Dorsolateral prefrontal cortex (tissue), 120 donors: ENCODE measurements at regions of chr7 and their contacts with region 1.

Region 1: GRCh38 chr7:102236592-102237287 is 49.9 kb upstream of the SH2B2 start:
- DNase-seq: peak; percentile 51 to 80 (median 68)
- H3K4me3 ChIP-seq: no peak overlapping the region
- H3K27ac ChIP-seq: no peak overlapping the region
- H3K27me3 ChIP-seq: no peaks in the 10 kb centered on the region
- CTCF ChIP-seq: peak; percentile 53 to 91 (median 83)

Region 2: GRCh38 chr7:101602484-101603241 is 634.1 kb before region 1 on chr7:
- intact Hi-C with region 1: loop called in 1 of 2 experiments (anchors 10 kb)
- DNase-seq: peak; percentile 58 to 84 (median 74)
- H3K4me3 ChIP-seq: peak overlapping the region in 3 of 59 donors; percentile 4 to 18 (median 13)
- H3K27ac ChIP-seq: no peak overlapping the region
- H3K27me3 ChIP-seq: peaks cover 0 to 4% (median 0%) of the 10 kb centered on the region in 45 donors
- CTCF ChIP-seq: peak; percentile 25 to 89 (median 79)

Region 3: DNA sequence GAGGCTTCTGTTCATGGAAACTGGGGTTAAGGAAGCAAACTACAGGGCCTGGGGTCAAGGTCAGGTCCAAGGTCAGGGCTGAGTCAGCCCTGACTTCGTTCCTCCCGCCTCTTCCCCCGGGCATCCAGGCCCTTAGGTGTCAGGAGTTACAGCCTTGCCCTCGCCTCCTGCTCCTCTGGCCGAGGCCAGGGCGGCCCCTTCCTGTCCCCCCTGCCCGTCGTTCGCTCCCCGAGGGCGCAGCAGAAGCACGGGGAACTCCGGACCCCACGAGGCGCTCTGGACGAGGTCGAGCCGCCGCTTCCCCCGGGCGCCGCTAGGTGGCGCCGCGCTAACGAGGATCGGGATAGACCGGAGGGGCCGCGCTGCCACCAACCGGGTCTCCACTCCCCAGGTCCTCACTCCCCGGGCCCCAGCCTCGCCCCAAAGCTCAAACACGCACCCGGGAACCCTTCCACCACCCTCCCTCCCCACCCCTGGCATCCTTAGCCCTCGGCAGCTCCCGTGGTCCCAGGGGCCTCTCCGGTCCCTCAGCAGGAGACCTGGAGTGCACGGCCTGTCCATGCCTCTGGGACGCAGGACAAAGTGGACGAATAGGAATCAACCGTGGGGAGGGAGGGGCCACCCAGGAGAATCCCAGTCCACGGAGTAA is 548.4 kb before region 1 on chr7:
- intact Hi-C with region 1: loop called (anchors 5 to 10 kb)
- DNase-seq: peak; percentile 58 to 82 (median 67)
- H3K4me3 ChIP-seq: peak overlapping the region in 42 of 59 donors; percentile 1 to 51 (median 34)
- H3K27ac ChIP-seq: no peak overlapping the region
- H3K27me3 ChIP-seq: peaks cover 0 to 3% (median 0%) of the 10 kb centered on the region in 45 donors
- CTCF ChIP-seq: peak; percentile 74 to 98 (median 96)

Region 4: DNA sequence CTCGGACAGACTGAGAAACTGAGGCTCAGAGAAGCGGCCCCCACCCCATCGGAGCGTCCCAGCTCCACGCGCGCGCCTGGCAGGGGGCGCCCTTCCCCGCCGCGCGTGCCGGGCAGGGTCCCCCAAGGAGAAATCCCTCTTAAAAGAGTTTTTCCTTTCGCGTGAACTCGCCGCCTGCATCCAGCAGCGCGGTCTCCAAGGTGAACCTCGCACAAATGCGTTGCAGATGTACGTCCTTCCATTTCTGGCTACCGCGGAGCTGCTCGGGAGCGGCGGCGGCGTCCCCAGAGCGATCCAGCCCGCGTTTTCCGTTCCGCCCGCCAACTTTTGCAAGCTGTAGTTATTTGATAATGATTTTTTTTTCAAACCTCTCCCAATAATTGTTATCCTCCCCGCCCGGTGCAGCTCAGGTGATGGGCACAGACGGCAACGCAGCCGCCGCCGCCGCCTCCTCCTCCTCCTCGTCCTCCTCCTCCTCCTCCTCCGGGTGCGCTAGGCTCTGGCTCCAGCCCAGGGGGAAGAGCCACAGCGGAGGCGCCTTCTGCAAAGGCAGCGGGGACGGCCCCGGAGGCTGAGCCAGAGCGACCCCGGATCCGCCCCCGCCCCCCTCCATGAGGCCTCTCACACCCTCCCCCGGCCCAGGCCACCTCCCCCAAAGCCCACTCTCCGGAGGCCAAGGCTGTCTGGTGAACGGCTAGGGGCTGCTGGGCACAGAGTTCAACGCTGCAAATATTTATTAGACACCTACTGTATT is 493.3 kb before region 1 on chr7:
- intact Hi-C with region 1: loop called in 1 of 2 experiments (anchors 2 kb)
- DNase-seq: peak in 6 of 10 donors; percentile 16 to 58 (median 40)
- H3K4me3 ChIP-seq: peak overlapping the region; percentile 38 to 77 (median 60)
- H3K27ac ChIP-seq: no peak overlapping the region
- H3K27me3 ChIP-seq: peaks cover 0 to 32% (median 3%) of the 10 kb centered on the region in 45 donors
- CTCF ChIP-seq: peak; percentile 17 to 78 (median 66)

Region 5: DNA sequence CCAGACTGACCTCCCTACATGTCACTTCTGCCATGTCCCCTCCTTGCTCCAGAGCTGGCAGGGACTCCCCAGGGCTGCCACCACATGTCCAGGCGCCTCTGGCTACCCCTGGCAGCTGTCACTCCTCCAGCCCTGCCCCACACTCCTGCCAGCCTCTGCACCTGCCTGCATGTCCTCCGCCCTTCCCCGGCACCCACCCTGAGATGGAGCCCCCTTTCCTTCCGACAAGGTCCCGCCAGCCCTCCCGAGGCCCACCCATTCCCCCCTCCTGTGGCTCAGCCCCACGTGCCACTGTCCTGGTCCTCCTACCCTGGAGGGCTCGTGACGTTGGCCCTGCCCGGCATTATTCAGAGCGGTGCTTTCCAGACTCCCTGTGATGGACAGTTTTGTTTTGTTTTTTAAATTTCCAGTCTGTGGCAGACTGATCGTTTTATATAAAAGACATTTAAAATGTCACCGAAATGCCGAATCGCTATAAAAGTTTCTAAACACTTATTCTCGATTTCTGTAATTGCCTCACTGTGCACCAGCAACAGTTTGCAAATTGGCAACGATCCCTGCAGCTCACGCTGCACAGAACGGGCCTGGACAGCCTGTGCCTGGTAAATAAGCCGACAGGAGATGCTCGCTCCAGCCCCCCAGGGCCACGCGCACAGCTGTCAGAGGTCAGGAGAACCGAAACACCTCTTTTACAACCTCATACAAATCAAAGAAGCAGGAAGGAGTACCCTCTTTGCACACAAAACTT is 61.1 kb before region 1 on chr7:
- intact Hi-C with region 1: no loop called
- DNase-seq: peak; percentile 49 to 71 (median 55)
- H3K4me3 ChIP-seq: peak overlapping the region in 11 of 59 donors; percentile 0 to 49 (median 14)
- H3K27ac ChIP-seq: peak overlapping the region in 41 of 59 donors; percentile 21 to 88 (median 61)
- H3K27me3 ChIP-seq: no peaks in the 10 kb centered on the region
- CTCF ChIP-seq: no peak